Thyroid gland (tissue), 4 donors: ENCODE measurements at regions of chr16 and their contacts with region 1.

Region 1: DNA sequence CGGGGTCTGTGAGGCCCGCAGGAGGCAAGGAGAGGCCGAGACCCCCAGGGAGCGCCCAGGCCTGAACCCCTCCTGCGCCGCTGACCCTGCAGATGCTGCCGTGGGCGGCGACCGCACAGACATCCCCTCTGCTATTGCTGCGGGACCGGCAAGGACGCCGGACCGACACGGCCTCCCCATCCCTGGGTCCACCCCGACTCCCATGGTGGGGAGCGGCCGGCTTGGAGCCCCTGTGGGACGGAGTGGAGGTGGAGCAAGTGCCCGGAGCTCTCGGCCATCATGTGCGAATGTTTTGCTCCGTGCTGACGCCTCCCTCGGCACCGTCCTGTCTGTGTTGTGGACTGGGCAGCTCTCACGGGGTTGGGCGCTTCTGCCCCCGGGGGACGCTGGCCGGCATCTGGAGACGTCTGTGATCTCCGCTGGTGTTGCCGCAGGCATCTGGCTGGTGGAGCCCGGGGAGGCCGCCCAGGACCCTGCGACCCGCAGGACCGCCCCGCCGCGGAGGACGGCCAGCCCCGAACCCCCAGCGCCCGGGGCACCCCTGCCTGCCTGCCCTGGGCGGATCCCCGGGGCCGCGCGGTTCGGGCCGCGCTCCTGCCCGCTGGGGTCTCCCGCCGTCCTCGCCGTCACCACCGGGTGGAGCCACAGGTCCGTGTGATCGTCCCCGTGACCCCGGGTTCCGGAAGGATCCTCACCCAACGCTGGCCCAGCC is 12.8 kb upstream of the GNG13 start:
- DNase-seq: peak; percentile 35 to 39
- H3K4me3 ChIP-seq: no peak overlapping the region
- H3K27ac ChIP-seq: no peak overlapping the region
- H3K4me1 ChIP-seq: peaks cover 5 to 13% of the 10 kb centered on the region in 2 donors
- H3K27me3 ChIP-seq: peaks cover 12% of the 10 kb centered on the region
- CTCF ChIP-seq: peak in 5 of 6 experiments; percentile 15 to 66 (median 34)
- POLR2A ChIP-seq: no peak

Region 2: GRCh38 chr16:554640-555365 is 258.6 kb before region 1 on chr16:
- intact Hi-C with region 1: no loop called
- DNase-seq: no peak
- H3K4me3 ChIP-seq: no peak overlapping the region
- H3K27ac ChIP-seq: no peak overlapping the region
- H3K4me1 ChIP-seq: peaks cover 13 to 20% of the 10 kb centered on the region in 2 donors
- H3K27me3 ChIP-seq: no peaks in the 10 kb centered on the region
- CTCF ChIP-seq: no peak
- POLR2A ChIP-seq: no peak

Region 3: GRCh38 chr16:768428-768827 is 44.9 kb before region 1 on chr16:
- intact Hi-C with region 1: no loop called
- DNase-seq: no peak
- H3K4me3 ChIP-seq: no peak overlapping the region
- H3K27ac ChIP-seq: no peak overlapping the region
- H3K4me1 ChIP-seq: no peaks in the 10 kb centered on the region
- H3K27me3 ChIP-seq: no peaks in the 10 kb centered on the region
- CTCF ChIP-seq: no peak
- POLR2A ChIP-seq: no peak

Region 4: GRCh38 chr16:1054660-1055556 is 241.5 kb after region 1 on chr16:
- intact Hi-C with region 1: loop called (anchors 5 kb)
- DNase-seq: peak; percentile 61 to 65
- H3K4me3 ChIP-seq: no peak overlapping the region
- H3K27ac ChIP-seq: no peak overlapping the region
- H3K4me1 ChIP-seq: peaks cover 0 to 3% of the 10 kb centered on the region in 2 donors
- H3K27me3 ChIP-seq: peaks cover 7% of the 10 kb centered on the region
- CTCF ChIP-seq: peak; percentile 61 to 88 (median 68)
- POLR2A ChIP-seq: no peak